MCF 10A (cell line): ENCODE measurements at regions of chr7 and their contacts with region 1.

Region 1: GRCh38 chr7:88789480-88790064 is 6.0 kb downstream of the TEX47 start:
- DNase-seq: peak; percentile 38
- H3K4me3 Mint-ChIP-seq: no peak overlapping the region
- H3K27ac Mint-ChIP-seq: no peak overlapping the region
- H3K4me1 Mint-ChIP-seq: no peaks in the 10 kb centered on the region
- H3K27me3 Mint-ChIP-seq: peaks cover 53% of the 10 kb centered on the region
- CTCF ChIP-seq: peak; percentile 46

Region 2: GRCh38 chr7:88046839-88047573 is 742.6 kb before region 1 on chr7:
- CTCF ChIA-PET with region 1: no interaction called
- POLR2A ChIA-PET with region 1: no interaction called
- intact Hi-C with region 1: no loop called
- DNase-seq: no peak
- H3K4me3 Mint-ChIP-seq: no peak overlapping the region
- H3K27ac Mint-ChIP-seq: no peak overlapping the region
- H3K4me1 Mint-ChIP-seq: no peaks in the 10 kb centered on the region
- H3K27me3 Mint-ChIP-seq: peaks cover 18% of the 10 kb centered on the region
- CTCF ChIP-seq: no peak

Region 3: GRCh38 chr7:88771417-88771816 is 18.2 kb before region 1 on chr7:
- CTCF ChIA-PET with region 1: interaction called, 19 read pairs
- POLR2A ChIA-PET with region 1: no interaction called
- intact Hi-C with region 1: no loop called
- DNase-seq: no peak
- H3K4me3 Mint-ChIP-seq: no peak overlapping the region
- H3K27ac Mint-ChIP-seq: no peak overlapping the region
- H3K4me1 Mint-ChIP-seq: no peaks in the 10 kb centered on the region
- H3K27me3 Mint-ChIP-seq: peaks cover 32% of the 10 kb centered on the region
- CTCF ChIP-seq: no peak

Region 4: DNA sequence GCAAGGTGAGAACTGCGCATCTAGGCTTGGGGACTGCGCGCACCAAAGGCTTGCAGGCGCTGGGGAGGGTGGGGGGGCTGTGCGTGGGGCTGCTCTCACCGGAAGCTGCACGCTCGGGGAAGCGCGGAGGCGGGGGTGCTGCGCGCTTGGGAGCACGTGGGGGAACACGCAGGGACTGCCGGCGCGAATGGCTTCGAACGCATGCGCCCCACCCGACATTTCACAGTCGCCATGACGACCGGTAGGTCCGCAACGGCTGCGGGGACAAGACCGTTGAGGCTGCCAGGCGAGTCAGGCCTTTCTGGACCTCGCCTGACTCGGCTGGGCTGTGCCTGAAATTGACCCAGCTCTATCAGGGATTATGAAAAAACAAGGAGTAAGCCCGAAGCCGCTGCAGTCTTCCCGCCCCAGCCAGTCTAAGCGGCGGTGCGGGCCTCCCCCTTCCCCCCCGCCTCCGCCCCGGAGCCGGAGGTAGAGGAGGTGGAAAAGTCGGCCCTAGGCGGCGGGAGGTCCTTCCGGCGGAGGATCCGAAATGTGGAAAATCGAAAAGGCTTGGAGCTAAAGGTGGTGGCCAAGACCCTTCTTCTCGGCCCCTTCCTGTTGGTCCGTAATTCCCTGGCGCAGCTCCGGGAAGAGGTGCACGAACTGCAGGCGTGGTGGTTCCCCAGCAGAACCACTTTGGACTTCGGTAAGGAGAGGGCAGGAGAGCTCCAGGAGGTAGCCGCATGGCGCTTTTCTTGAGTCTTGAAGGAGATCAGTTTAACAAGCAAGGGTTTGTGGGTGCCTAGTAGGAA is 1329.8 kb after region 1 on chr7:
- CTCF ChIA-PET with region 1: no interaction called
- POLR2A ChIA-PET with region 1: no interaction called
- intact Hi-C with region 1: loop called (anchors 10 kb)
- DNase-seq: no peak
- H3K4me3 Mint-ChIP-seq: peak overlapping the region; percentile 36
- H3K27ac Mint-ChIP-seq: no peak overlapping the region
- H3K4me1 Mint-ChIP-seq: peaks cover 6% of the 10 kb centered on the region
- H3K27me3 Mint-ChIP-seq: peaks cover 45% of the 10 kb centered on the region
- CTCF ChIP-seq: no peak